ENCODE measurements at regions of chr9 and their contacts with region 1.

Region 1: DNA sequence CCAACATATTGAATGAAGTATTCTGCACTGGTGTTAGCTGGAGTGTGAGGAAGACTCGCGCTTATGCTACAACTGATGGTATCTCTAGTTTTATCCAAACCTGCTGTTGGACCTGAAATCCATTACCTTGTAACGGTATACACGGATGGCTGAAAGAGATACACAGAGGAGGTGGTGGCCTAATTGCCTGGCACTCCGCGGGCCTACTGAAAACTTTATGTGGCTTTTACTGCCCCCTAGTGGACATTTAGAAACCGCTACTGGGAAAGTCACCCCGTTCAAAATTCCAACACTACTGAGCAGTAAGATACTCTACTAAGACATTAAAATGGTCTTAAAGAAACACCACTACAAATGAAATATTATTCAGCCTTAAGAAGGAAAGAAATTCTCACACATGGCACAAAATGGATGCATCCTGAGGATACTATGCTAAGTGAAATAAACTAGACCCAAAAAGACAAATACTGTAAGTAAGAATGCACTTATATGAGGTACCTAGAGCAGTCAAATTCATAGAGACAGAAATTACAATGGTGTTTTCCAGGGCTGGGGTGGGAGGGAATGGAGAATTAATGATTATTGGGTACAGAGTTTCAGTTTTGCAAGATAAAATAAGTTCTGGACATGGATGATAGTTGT is 100.4 kb downstream of the TTLL11 start:
- DNase-seq: peak; percentile 75
- ATAC-seq: peak; percentile 82
- H3K4me3 ChIP-seq: no peak overlapping the region
- H3K4me3 Mint-ChIP-seq: no peak overlapping the region
- H3K27ac ChIP-seq: no peak overlapping the region
- H3K27ac Mint-ChIP-seq: no peak overlapping the region
- H3K4me1 ChIP-seq: peaks cover 0 to 3% of the 10 kb centered on the region in 2 donors
- H3K4me1 Mint-ChIP-seq: peaks cover 9% of the 10 kb centered on the region
- H3K27me3 ChIP-seq: no peaks in the 10 kb centered on the region
- H3K27me3 Mint-ChIP-seq: no peaks in the 10 kb centered on the region
- CTCF ChIP-seq: peak; percentile 91

Region 2: GRCh38 chr9:121545875-121546423 is 446.7 kb before region 1 on chr9:
- CTCF ChIA-PET with region 1: interaction called, 17 read pairs
- POLR2A ChIA-PET with region 1: no interaction called
- intact Hi-C with region 1: loop called (anchors 1 kb)
- DNase-seq: peak; percentile 77
- ATAC-seq: peak; percentile 87
- H3K4me3 ChIP-seq: no peak overlapping the region
- H3K4me3 Mint-ChIP-seq: no peak overlapping the region
- H3K27ac ChIP-seq: no peak overlapping the region
- H3K27ac Mint-ChIP-seq: no peak overlapping the region
- H3K4me1 ChIP-seq: peaks cover 16% of the 10 kb centered on the region in 2 donors
- H3K4me1 Mint-ChIP-seq: peaks cover 5% of the 10 kb centered on the region
- H3K27me3 ChIP-seq: peaks cover 0 to 38% (median 16%) of the 10 kb centered on the region in 4 experiments
- H3K27me3 Mint-ChIP-seq: peaks cover 29% of the 10 kb centered on the region
- CTCF ChIP-seq: peak; percentile 85

Region 3: DNA sequence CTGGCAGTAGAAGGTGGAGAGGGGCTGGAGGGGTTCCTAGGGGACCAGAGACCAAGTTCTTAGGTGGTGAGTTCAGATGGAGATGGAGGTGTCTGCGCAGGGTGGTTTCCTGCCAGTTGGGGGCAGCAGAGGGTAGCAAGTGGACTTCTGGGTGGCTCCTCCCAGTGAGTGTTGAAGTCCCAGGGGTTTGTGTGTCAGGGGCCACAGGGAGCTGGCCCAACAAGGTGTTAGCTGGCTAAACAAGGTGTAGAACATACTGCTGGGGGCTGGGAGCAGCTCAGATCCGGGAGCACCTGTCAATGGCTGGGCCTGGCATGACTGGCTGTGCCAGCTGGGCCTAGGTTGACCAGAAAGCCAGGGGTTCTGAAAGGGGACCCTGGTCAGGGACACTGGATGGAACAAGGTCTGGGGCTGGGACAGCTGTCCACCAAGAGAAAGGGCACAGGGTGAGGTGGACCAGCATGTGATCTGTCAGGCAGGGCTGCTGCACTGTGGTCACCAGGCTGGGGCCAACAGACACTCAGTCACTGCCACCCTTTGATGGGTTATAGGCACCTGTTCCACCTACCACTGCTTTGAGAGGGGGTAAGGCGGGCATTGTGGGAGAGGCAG is 305.7 kb before region 1 on chr9:
- CTCF ChIA-PET with region 1: interaction called, 18 read pairs
- POLR2A ChIA-PET with region 1: no interaction called
- intact Hi-C with region 1: loop called (anchors 1 kb)
- DNase-seq: peak; percentile 64
- ATAC-seq: peak; percentile 88
- H3K4me3 ChIP-seq: no peak overlapping the region
- H3K4me3 Mint-ChIP-seq: no peak overlapping the region
- H3K27ac ChIP-seq: no peak overlapping the region
- H3K27ac Mint-ChIP-seq: no peak overlapping the region
- H3K4me1 ChIP-seq: no peaks in the 10 kb centered on the region
- H3K4me1 Mint-ChIP-seq: no peaks in the 10 kb centered on the region
- H3K27me3 ChIP-seq: peaks cover 0 to 11% (median 0%) of the 10 kb centered on the region in 4 experiments
- H3K27me3 Mint-ChIP-seq: peaks cover 18% of the 10 kb centered on the region
- CTCF ChIP-seq: peak; percentile 74

Region 4: GRCh38 chr9:121735065-121735789 is 257.5 kb before region 1 on chr9:
- CTCF ChIA-PET with region 1: interaction called, 9 read pairs
- POLR2A ChIA-PET with region 1: no interaction called
- intact Hi-C with region 1: loop called (anchors 1 kb)
- DNase-seq: peak; percentile 23
- ATAC-seq: peak; percentile 71
- H3K4me3 ChIP-seq: no peak overlapping the region
- H3K4me3 Mint-ChIP-seq: peak overlapping the region; percentile 66
- H3K27ac ChIP-seq: no peak overlapping the region
- H3K27ac Mint-ChIP-seq: no peak overlapping the region
- H3K4me1 ChIP-seq: peaks cover 7 to 11% of the 10 kb centered on the region in 2 donors
- H3K4me1 Mint-ChIP-seq: peaks cover 19% of the 10 kb centered on the region
- H3K27me3 ChIP-seq: peaks cover 0 to 35% (median 12%) of the 10 kb centered on the region in 4 experiments
- H3K27me3 Mint-ChIP-seq: peaks cover 26% of the 10 kb centered on the region
- CTCF ChIP-seq: peak; percentile 24

Region 5: GRCh38 chr9:121858788-121859187 is 133.9 kb before region 1 on chr9:
- CTCF ChIA-PET with region 1: interaction called, 4 read pairs
- POLR2A ChIA-PET with region 1: no interaction called
- intact Hi-C with region 1: loop called (anchors 1 kb)
- DNase-seq: peak; percentile 38
- ATAC-seq: peak; percentile 76
- H3K4me3 ChIP-seq: no peak overlapping the region
- H3K4me3 Mint-ChIP-seq: peak overlapping the region; percentile 60
- H3K27ac ChIP-seq: no peak overlapping the region
- H3K27ac Mint-ChIP-seq: peak overlapping the region; percentile 68
- H3K4me1 ChIP-seq: peaks cover 0 to 12% of the 10 kb centered on the region in 2 donors
- H3K4me1 Mint-ChIP-seq: peaks cover 13% of the 10 kb centered on the region
- H3K27me3 ChIP-seq: no peaks in the 10 kb centered on the region
- H3K27me3 Mint-ChIP-seq: no peaks in the 10 kb centered on the region
- CTCF ChIP-seq: no peak

Measured in B cell (primary cell).